HEK293 (cell line): ENCODE measurements at regions of chr4 and their contacts with region 1.

Region 1: DNA sequence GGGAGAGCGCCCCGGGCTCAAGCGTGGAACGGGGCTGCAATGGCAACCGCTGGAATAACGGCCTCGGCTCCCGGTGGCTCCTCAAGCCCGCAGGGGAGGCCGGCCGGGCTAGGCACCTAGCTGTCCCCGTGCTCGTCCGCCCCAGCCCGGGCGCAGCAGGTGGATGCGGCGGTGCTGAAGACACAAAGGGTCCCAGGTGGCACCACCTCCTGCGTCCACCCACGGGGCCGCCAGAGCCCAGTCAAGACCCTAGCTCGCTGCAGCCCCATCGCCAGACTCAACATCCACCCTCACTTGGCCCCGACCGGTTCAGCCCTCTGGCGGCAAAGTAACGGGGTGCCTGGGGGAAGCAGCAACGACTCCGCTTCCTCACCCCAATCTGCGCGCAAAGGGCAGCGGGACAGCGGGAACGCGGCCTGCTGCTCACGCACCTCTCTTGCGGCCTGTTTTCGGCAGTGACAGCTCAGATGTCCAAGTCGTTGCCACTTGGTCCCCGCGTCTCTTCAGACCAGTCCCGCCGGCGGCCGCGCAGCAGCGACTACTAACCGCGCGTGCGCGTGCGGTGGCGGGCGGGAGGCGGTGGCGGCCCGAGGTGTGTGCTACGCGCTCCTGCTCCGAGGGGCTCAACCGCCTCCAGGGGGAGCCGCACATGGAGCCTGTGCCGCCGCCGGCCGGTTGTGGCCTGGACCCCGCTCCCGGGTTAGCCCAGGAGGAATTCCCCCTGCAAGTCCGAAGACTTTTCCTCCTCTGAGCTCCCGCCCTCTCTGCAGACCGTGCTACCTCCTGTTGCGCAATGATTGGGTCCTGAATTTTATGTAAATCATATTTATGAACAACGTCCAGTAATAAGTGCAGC is at the start of gene CLGN:
- H3K4me3 ChIP-seq: peak within 1 kb of the TSS; percentile 79
- H3K27ac ChIP-seq: peak within 1 kb of the TSS; percentile 53; the same call in 1 of the 2 replicates
- H3K4me1 ChIP-seq: no peaks in the 10 kb centered on the region
- CTCF ChIP-seq: peak; percentile 81

Region 2: GRCh38 chr4:140116442-140117104 is 310.8 kb before region 1 on chr4:
- CTCF ChIA-PET with region 1: no interaction called
- POLR2A ChIA-PET with region 1: no interaction called
- H3K4me3 ChIP-seq: no peak overlapping the region
- H3K27ac ChIP-seq: no peak overlapping the region
- H3K4me1 ChIP-seq: 0 out of 2 replicates have a peak, but pooled peaks cover 2% of the 10 kb centered on the region
- CTCF ChIP-seq: no peak

Region 3: GRCh38 chr4:140408974-140409373 is 18.4 kb before region 1 on chr4:
- CTCF ChIA-PET with region 1: interaction called, 10 read pairs
- POLR2A ChIA-PET with region 1: no interaction called
- H3K4me3 ChIP-seq: no peak overlapping the region
- H3K27ac ChIP-seq: no peak overlapping the region
- H3K4me1 ChIP-seq: no peaks in the 10 kb centered on the region
- CTCF ChIP-seq: no peak